Naive thymus-derived CD4-positive, alpha-beta T cell (primary cell): ENCODE measurements at regions of chr3 and their contacts with region 1.

Region 1: GRCh38 chr3:69084326-69085167 is at the start of gene ARL6IP5:
- DNase-seq: peak; percentile 71 to 95 (median 93)
- ATAC-seq: peak; percentile 84
- H3K4me3 ChIP-seq: peak within 1 kb of the TSS; percentile 89
- H3K4me3 Mint-ChIP-seq: peak within 1 kb of the TSS; percentile 88 to 99 (median 97)
- H3K27ac ChIP-seq: peak within 1 kb of the TSS; percentile 76
- H3K27ac Mint-ChIP-seq: peak within 1 kb of the TSS; percentile 92 to 99 (median 98)
- H3K4me1 ChIP-seq: peaks cover 58% of the 10 kb centered on the region in 2 donors
- H3K4me1 Mint-ChIP-seq: peaks cover 44 to 72% (median 62%) of the 10 kb centered on the region in 7 donors
- H3K27me3 ChIP-seq: no peaks in the 10 kb centered on the region
- H3K27me3 Mint-ChIP-seq: no peaks in the 10 kb centered on the region
- total RNA-seq, gene ARL6IP5: 75.8 to 226 (median 119) TPM

Region 2: GRCh38 chr3:69058180-69058946 is 26.2 kb before region 1 on chr3:
- CTCF ChIA-PET with region 1: interaction called, 4 read pairs
- POLR2A ChIA-PET with region 1: interaction called, 103 read pairs
- intact Hi-C with region 1: loop called in 1 of 2 experiments (anchors 1 kb)
- DNase-seq: peak in 6 of 9 donors; percentile 41 to 57 (median 48)
- ATAC-seq: peak; percentile 97
- H3K4me3 ChIP-seq: peak overlapping the region; percentile 12
- H3K4me3 Mint-ChIP-seq: peak overlapping the region; percentile 2 to 82 (median 60)
- H3K27ac ChIP-seq: peak overlapping the region; percentile 75
- H3K27ac Mint-ChIP-seq: peak overlapping the region; percentile 77 to 94 (median 92)
- H3K4me1 ChIP-seq: peaks cover 13 to 19% of the 10 kb centered on the region in 2 donors
- H3K4me1 Mint-ChIP-seq: peaks cover 18 to 45% (median 30%) of the 10 kb centered on the region in 7 donors
- H3K27me3 ChIP-seq: no peaks in the 10 kb centered on the region
- H3K27me3 Mint-ChIP-seq: no peaks in the 10 kb centered on the region

Region 3: DNA sequence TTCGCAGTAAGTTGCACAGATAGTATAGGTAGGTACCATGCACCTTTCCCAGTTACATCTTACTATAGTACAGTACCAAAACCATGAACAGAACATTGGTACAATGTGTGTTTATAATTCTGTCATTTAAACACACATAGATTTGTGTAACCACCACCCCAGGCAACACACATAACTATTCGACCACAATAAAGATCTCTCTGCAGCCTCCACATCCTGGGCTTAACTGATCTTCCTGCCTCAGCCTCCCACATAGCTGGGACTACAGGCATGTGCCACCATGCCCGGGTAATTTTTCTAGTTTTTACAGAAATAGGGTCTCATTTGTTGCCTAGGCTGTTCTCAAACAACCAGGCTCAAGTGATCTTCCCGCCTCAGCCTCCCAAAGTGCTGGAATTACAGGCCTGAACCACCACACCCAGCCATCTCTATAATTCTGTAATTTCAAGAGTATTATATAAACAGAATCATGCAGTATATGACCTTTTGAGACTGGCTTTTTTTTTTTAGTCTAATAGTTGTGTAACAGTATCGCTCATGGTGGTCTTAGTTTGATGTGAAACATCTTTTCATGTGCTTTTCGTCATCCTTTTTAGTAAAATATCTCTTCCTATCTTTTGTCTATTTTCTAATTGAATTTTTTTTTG is 19.1 kb before region 1 on chr3:
- CTCF ChIA-PET with region 1: interaction called, 3 read pairs
- POLR2A ChIA-PET with region 1: interaction called, 12 read pairs
- intact Hi-C with region 1: loop called in 1 of 2 experiments (anchors 1 kb)
- DNase-seq: peak in 5 of 9 donors; percentile 22 to 37 (median 27)
- ATAC-seq: peak; percentile 66
- H3K4me3 ChIP-seq: no peak overlapping the region
- H3K4me3 Mint-ChIP-seq: peak overlapping the region in 9 of 10 donors; percentile 11 to 81 (median 53)
- H3K27ac ChIP-seq: peak overlapping the region; percentile 5
- H3K27ac Mint-ChIP-seq: peak overlapping the region; percentile 57 to 91 (median 83)
- H3K4me1 ChIP-seq: peaks cover 22 to 25% of the 10 kb centered on the region in 2 donors
- H3K4me1 Mint-ChIP-seq: peaks cover 21 to 55% (median 42%) of the 10 kb centered on the region in 7 donors
- H3K27me3 ChIP-seq: no peaks in the 10 kb centered on the region
- H3K27me3 Mint-ChIP-seq: no peaks in the 10 kb centered on the region

Region 4: GRCh38 chr3:69306239-69307185 is 222.0 kb after region 1 on chr3:
- CTCF ChIA-PET with region 1: no interaction called
- POLR2A ChIA-PET with region 1: no interaction called
- intact Hi-C with region 1: no loop called
- DNase-seq: peak; percentile 35 to 72 (median 67)
- ATAC-seq: peak; percentile 98
- H3K4me3 ChIP-seq: no peak overlapping the region
- H3K4me3 Mint-ChIP-seq: peak overlapping the region in 3 of 10 donors; percentile 4 to 61 (median 44)
- H3K27ac ChIP-seq: no peak overlapping the region
- H3K27ac Mint-ChIP-seq: peak overlapping the region in 2 of 9 donors; percentile 29 to 35
- H3K4me1 ChIP-seq: no peaks in the 10 kb centered on the region
- H3K4me1 Mint-ChIP-seq: peaks cover 0 to 22% (median 4%) of the 10 kb centered on the region in 7 donors
- H3K27me3 ChIP-seq: no peaks in the 10 kb centered on the region
- H3K27me3 Mint-ChIP-seq: no peaks in the 10 kb centered on the region